ENCODE measurements at regions of chr19 and their contacts with region 1.

Region 1: GRCh38 chr19:48795055-48795684 is 15.7 kb downstream of the BCAT2 start:
- DNase-seq: peak; percentile 87 to 88
- H3K4me3 ChIP-seq: peak overlapping the region; percentile 55
- H3K27ac ChIP-seq: peak overlapping the region; percentile 34
- H3K4me1 ChIP-seq: 0 out of 2 replicates have a peak, but pooled peaks cover 3% of the 10 kb centered on the region
- H3K27me3 ChIP-seq: no peaks in the 10 kb centered on the region
- CTCF ChIP-seq: peak; percentile 100

Region 2: DNA sequence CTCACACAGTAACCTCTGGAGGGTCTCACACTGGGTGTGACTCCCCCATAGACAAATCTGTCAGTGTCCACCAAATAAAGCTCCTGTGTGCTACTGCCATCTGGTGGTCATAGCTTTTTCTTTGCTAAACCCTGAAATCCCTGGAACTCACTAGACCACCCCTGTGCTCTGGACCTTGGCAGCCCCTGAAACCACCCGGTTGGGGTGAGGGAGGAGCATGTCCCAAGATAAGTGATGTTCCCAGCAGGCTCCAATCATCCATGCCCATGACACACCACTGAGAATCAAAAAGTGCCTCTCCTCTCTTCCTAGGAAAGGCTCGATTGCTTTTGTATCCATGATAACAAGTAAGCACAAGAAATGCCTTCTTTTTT is 47.6 kb after region 1 on chr19:
- CTCF ChIA-PET with region 1: interaction called, 10 read pairs
- POLR2A ChIA-PET with region 1: no interaction called
- intact Hi-C with region 1: loop called (anchors 1 kb)
- DNase-seq: peak; percentile 36 to 50
- H3K4me3 ChIP-seq: no peak overlapping the region
- H3K27ac ChIP-seq: no peak overlapping the region
- H3K4me1 ChIP-seq: no peaks in the 10 kb centered on the region
- H3K27me3 ChIP-seq: no peaks in the 10 kb centered on the region
- CTCF ChIP-seq: peak; percentile 95

Region 3: DNA sequence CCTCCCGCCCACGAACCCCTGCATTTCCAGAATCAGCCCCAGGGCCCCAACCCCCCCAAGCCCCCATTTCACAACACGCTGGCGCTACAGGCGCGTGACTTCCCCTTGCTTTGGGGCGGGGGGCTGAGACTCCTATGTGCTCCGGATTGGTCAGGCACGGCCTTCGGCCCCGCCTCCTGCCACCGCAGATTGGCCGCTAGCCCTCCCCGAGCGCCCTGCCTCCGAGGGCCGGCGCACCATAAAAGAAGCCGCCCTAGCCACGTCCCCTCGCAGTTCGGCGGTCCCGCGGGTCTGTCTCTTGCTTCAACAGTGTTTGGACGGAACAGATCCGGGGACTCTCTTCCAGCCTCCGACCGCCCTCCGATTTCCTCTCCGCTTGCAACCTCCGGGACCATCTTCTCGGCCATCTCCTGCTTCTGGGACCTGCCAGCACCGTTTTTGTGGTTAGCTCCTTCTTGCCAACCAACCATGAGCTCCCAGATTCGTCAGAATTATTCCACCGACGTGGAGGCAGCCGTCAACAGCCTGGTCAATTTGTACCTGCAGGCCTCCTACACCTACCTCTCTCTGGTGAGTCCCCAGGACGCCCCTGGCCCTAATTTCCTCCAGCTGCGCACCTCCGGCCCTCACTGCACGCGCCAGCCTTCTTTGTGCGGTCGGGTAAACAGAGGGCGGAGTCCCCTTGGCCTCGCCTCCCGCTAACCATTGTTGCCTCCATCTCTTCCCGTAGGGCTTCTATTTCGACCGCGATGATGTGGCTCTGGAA is 170.1 kb after region 1 on chr19 and contains the start of gene FTL:
- CTCF ChIA-PET with region 1: interaction called, 5 read pairs
- POLR2A ChIA-PET with region 1: interaction called, 16 read pairs
- intact Hi-C with region 1: no loop called
- DNase-seq: peak; percentile 92 to 99
- H3K4me3 ChIP-seq: peak within 1 kb of the TSS; percentile 84
- H3K27ac ChIP-seq: peak within 1 kb of the TSS; percentile 95
- H3K4me1 ChIP-seq: peaks cover 39% of the 10 kb centered on the region
- H3K27me3 ChIP-seq: no peaks in the 10 kb centered on the region
- CTCF ChIP-seq: no peak
- total RNA-seq, gene FTL: 3,402 and 3,822 TPM in 2 replicates

Region 4: DNA sequence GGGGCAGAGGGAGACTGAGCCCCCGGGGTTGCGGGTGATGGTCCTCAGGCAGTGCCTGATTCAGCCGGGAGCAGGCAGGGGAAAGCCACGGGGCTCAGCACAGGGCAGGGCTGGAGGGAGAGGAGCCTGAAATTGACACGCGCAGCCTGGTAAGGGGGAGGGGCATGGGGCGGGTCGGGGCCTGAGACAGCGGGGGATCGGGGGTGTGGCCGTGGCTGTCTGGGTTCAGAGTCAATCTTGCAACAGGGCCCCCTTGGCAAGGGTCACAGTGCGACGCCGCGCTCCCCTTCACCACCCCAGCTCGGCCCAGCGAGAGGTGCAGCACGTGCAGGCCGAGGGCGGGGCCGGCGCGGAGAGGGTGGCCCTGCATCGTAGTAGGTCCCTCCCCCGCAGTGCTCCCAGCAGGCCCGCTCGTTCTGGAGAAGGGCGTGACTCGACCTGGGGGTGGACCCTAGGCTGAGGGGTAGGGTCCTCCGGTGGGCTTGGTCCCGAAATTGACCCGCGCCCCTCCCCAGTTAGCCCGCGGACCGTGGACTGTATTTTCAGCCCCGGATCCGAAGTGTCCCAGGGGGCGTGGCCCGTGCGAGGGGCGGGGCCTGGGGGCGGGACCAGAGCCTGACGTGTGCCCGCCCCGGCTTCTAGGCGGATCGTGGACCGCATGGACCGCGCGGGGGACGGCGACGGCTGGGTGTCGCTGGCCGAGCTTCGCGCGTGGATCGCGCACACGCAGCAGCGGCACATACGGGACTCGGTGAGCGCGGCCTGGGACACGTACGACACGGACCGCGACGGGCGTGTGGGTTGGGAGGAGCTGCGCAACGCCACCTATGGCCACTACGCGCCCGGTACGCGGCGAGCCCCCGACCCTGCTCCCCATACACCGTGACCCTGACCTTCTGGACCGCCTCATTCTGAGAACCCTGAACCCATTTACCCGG is 738.6 kb after region 1 on chr19:
- CTCF ChIA-PET with region 1: interaction called, 12 read pairs
- POLR2A ChIA-PET with region 1: no interaction called
- intact Hi-C with region 1: no loop called
- DNase-seq: peak; percentile 61 to 73
- H3K4me3 ChIP-seq: peak overlapping the region; percentile 87
- H3K27ac ChIP-seq: no peak overlapping the region
- H3K4me1 ChIP-seq: no peaks in the 10 kb centered on the region; the same call in 1 of the 2 replicates
- H3K27me3 ChIP-seq: no peaks in the 10 kb centered on the region
- CTCF ChIP-seq: no peak; the same call in 1 of the 2 replicates